Uterus (tissue), 4 donors: ENCODE measurements at regions of chr22 and their contacts with region 1.

Region 1: GRCh38 chr22:25465949-25466348 is 98.5 kb upstream of the GRK3 start:
- DNase-seq: no peak
- H3K4me3 ChIP-seq: no peak overlapping the region
- H3K27ac ChIP-seq: peak overlapping the region in 1 of 2 donors; percentile 26
- H3K4me1 ChIP-seq: peaks cover 0 to 5% of the 10 kb centered on the region in 2 donors
- H3K27me3 ChIP-seq: no peaks in the 10 kb centered on the region
- CTCF ChIP-seq: no peak
- POLR2A ChIP-seq: no peak

Region 2: DNA sequence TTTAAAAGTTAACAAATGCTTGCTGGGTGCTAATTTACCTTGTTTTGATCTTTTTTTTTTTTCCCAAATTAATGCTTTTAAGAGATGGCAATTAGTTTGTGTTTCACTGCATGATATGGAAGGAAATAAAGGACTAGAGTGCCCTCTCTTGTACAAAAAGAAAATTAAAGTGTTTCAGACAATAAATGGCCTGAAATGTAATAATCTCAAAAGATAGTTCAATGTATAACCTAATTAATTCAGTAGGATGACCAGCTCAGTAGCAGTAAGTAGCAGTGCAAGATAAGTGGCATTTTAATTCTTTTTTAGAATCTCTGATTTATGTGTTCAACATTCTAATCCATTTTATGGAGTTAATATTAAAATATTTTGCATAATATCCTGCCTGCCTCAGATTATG is 236.1 kb after region 1 on chr22:
- intact Hi-C with region 1: loop called (anchors 10 kb)
- DNase-seq: no peak
- H3K4me3 ChIP-seq: no peak overlapping the region
- H3K27ac ChIP-seq: no peak overlapping the region
- H3K4me1 ChIP-seq: no peaks in the 10 kb centered on the region
- H3K27me3 ChIP-seq: no peaks in the 10 kb centered on the region
- CTCF ChIP-seq: peak; percentile 32 to 55 (median 50)
- POLR2A ChIP-seq: no peak